Activated CD4-positive, alpha-beta T cell treated with anti-CD3 and anti-CD28 coated beads for 36 hours (primary cell): ENCODE measurements at regions of chr4 and their contacts with region 1.

Region 1: DNA sequence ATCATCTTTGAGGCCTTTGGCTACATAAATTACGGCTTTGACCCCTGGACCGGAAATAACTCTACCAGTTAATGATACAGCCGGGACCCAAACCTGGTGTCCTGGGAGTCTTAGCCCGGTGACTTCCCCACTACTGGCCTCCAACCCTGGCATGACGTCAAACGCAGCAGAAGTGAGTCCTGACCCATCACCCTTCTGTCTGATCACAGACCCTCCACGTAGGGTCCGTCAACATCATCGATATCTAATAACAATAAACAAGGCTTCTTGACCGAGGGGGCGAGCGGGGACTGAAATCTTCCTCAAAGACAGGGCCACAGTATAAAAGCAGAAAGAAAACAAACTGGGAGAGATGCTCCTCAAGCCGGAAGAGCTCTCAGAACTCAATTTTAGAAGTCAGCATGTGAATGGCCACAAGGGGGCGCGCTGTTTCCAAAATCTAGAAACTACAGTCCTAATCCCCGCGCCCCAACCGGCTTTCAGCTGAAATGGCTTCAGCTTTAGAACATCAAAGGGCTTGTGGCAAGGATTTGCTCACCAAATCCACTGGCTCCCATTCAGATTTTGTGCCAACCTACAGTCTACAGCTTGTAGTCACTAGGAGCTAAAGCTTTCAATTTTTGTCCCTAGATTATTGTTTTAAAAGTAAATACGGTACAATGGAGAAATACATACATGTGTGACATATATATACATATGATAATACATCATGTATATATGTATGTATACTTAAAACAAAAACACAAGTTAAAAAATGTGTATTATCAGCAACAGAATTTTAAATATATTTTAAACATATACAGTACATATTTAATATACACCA is 46.4 kb upstream of the ENPP6 start:
- DNase-seq: peak; percentile 98
- ATAC-seq: peak; percentile 57
- H3K4me3 Mint-ChIP-seq: peak overlapping the region; percentile 2
- H3K27ac Mint-ChIP-seq: peak overlapping the region; percentile 41
- H3K4me1 Mint-ChIP-seq: peaks cover 47% of the 10 kb centered on the region
- H3K27me3 Mint-ChIP-seq: no peaks in the 10 kb centered on the region

Region 2: DNA sequence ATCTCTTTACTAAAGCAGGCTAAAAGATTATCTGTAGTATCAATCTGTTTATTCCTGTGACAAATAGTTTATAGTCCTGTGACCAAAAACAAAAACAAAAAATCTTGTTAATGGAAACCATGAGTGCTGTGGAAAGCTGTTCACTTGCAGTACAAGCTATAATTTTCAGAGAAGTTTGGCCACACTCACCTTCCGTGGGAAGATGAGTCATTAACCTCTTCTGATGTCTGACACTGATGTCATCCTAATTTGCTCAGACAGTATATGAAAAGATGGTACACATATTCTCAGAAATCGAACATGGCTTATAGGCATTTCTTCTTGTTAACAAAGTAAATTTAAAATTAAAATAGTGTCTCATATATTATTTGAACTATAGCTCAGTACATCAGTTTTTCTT is 26.5 kb before region 1 on chr4:
- CTCF ChIA-PET with region 1: interaction called, 10 read pairs
- POLR2A ChIA-PET with region 1: no interaction called
- intact Hi-C with region 1: no loop called
- DNase-seq: peak; percentile 73
- ATAC-seq: peak; percentile 97
- H3K4me3 Mint-ChIP-seq: peak overlapping the region; percentile 9
- H3K27ac Mint-ChIP-seq: peak overlapping the region; percentile 84
- H3K4me1 Mint-ChIP-seq: peaks cover 28% of the 10 kb centered on the region
- H3K27me3 Mint-ChIP-seq: no peaks in the 10 kb centered on the region

Region 3: GRCh38 chr4:184287697-184288255 is 23.7 kb after region 1 on chr4:
- CTCF ChIA-PET with region 1: interaction called, 39 read pairs
- POLR2A ChIA-PET with region 1: interaction called, 10 read pairs
- intact Hi-C with region 1: loop called in 1 of 2 experiments (anchors 1 kb)
- DNase-seq: no peak
- ATAC-seq: no peak
- H3K4me3 Mint-ChIP-seq: no peak overlapping the region
- H3K27ac Mint-ChIP-seq: peak overlapping the region; percentile 40
- H3K4me1 Mint-ChIP-seq: peaks cover 56% of the 10 kb centered on the region
- H3K27me3 Mint-ChIP-seq: peaks cover 4% of the 10 kb centered on the region

Region 4: GRCh38 chr4:184343502-184344177 is 79.5 kb after region 1 on chr4:
- CTCF ChIA-PET with region 1: interaction called, 11 read pairs
- POLR2A ChIA-PET with region 1: no interaction called
- intact Hi-C with region 1: loop called in 1 of 2 experiments (anchors 2 kb)
- DNase-seq: peak; percentile 68
- ATAC-seq: peak; percentile 81
- H3K4me3 Mint-ChIP-seq: peak overlapping the region; percentile 76
- H3K27ac Mint-ChIP-seq: peak overlapping the region; percentile 68
- H3K4me1 Mint-ChIP-seq: peaks cover 30% of the 10 kb centered on the region
- H3K27me3 Mint-ChIP-seq: peaks cover 5% of the 10 kb centered on the region

Region 5: DNA sequence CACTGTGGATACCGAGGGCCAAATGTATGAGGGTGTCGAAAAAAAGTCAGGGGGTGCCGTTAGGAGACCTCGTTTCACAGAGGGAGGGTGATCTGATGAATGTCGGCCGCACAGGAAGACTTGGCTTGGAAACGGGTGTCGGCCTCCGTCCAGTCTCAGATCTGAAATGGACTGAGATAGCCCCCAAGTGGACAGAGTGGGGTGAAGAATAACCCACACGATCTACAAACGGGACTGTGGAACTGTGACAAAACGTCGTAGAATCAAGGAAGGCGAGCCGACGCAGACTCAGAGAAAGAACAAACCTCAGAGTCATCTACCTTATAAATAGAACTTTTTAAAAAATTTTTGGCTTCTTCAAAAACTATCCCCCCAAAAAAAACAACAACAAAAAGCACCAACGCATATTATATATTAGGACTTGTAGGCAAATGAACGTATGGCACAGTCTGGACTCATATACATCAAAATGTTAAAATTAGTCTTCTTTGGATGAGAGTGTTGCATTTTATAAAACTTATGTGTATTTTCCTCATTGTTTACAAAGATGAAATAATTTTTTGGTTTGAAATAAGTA is 274.0 kb after region 1 on chr4:
- CTCF ChIA-PET with region 1: interaction called, 15 read pairs
- POLR2A ChIA-PET with region 1: interaction called, 7 read pairs
- intact Hi-C with region 1: loop called (anchors 1 kb)
- DNase-seq: peak; percentile 69
- ATAC-seq: peak; percentile 43
- H3K4me3 Mint-ChIP-seq: peak overlapping the region; percentile 92
- H3K27ac Mint-ChIP-seq: peak overlapping the region; percentile 95
- H3K4me1 Mint-ChIP-seq: peaks cover 45% of the 10 kb centered on the region
- H3K27me3 Mint-ChIP-seq: no peaks in the 10 kb centered on the region

Region 6: DNA sequence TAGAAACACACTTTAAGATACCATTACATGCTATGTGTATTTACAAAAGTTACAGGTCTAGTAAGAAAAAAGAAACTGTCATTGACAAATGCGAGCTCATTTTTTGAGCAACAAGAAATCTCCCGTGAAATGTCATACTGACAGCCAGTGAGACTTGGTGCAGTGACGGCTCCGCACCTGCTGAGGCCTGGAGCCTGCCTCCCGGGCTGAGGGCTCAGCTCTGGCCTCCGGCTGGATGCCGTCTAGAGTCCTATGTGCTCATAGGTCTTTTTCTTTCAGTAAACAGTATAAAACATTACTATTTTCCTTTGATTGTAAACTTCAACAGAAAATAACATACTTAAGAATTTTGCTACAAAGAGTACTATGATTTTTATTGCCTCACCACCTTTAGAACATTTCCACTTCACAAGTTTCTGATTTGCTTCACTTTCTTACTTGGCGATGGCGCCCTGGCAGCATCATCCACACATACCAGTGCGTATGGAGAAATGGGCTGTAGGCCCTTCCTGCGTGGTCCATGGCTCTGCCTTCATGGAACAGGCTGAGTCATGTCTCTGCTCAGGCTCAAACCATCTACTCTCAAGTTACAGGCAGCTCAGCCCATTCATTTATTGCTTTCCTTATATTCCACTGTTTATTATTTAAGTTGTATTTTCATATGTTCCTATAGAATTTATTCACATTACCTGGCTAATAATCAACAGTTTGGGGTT is 363.8 kb after region 1 on chr4:
- CTCF ChIA-PET with region 1: interaction called, 3 read pairs
- POLR2A ChIA-PET with region 1: no interaction called
- intact Hi-C with region 1: loop called in 1 of 2 experiments (anchors 5 kb)
- DNase-seq: peak; percentile 17
- ATAC-seq: peak; percentile 31
- H3K4me3 Mint-ChIP-seq: no peak overlapping the region
- H3K27ac Mint-ChIP-seq: peak overlapping the region; percentile 2
- H3K4me1 Mint-ChIP-seq: peaks cover 48% of the 10 kb centered on the region
- H3K27me3 Mint-ChIP-seq: no peaks in the 10 kb centered on the region

Region 7: GRCh38 chr4:184733654-184734524 is 469.8 kb after region 1 on chr4 and contains the start of gene CENPU:
- CTCF ChIA-PET with region 1: interaction called, 3 read pairs
- POLR2A ChIA-PET with region 1: interaction called, 6 read pairs
- intact Hi-C with region 1: loop called (anchors 1 kb)
- DNase-seq: peak; percentile 98
- ATAC-seq: peak; percentile 95
- H3K4me3 Mint-ChIP-seq: peak within 1 kb of the TSS; percentile 98
- H3K27ac Mint-ChIP-seq: peak within 1 kb of the TSS; percentile 94
- H3K4me1 Mint-ChIP-seq: peaks cover 24% of the 10 kb centered on the region
- H3K27me3 Mint-ChIP-seq: no peaks in the 10 kb centered on the region
- total RNA-seq, gene CENPU: 87.7 to 88.4 TPM